ENCODE measurements at regions of chr7 and their contacts with region 1.

Region 1: GRCh38 chr7:155380221-155380861 is 77.6 kb upstream of the EN2 start:
- DNase-seq: peak; percentile 95

Region 2: GRCh38 chr7:155363852-155364562 is 16.3 kb before region 1 on chr7:
- CTCF ChIA-PET with region 1: interaction called, 12 read pairs
- POLR2A ChIA-PET with region 1: no interaction called
- DNase-seq: no peak

Region 3: DNA sequence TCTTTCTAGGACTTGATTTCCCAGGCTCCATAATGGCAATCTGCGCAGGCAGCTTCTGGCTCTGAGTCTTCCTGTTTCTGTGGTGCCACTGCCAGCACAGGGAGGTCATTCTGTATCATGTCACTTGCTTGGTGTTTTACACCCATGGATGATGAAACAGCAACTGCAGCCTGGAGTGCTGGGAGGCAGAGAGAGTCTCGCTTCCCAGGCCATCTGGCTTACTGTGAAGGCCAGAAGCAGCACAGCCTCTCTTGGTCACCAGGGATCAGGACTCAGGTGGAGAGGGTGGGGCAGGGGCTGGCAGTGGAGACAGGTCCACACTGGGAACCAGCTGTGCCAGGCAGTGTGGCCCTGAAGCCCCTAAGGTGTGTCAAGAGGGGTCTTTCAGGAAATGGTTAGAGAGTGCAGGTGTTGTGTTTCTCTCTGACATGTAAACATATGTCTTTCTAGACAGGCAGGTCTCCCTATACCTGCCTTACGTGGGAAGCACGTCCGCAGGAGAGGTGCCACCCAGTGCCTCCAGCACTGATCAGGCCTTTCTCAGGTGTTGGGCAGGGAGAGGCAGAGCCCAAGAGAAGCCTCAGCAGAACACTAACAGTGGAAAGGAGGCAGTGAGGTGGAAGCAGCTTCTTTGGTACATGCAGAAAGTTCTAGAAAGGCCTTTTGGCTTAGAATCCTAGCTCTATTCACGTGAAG is 11.3 kb before region 1 on chr7:
- CTCF ChIA-PET with region 1: interaction called, 12 read pairs
- POLR2A ChIA-PET with region 1: no interaction called
- DNase-seq: no peak

Region 4: DNA sequence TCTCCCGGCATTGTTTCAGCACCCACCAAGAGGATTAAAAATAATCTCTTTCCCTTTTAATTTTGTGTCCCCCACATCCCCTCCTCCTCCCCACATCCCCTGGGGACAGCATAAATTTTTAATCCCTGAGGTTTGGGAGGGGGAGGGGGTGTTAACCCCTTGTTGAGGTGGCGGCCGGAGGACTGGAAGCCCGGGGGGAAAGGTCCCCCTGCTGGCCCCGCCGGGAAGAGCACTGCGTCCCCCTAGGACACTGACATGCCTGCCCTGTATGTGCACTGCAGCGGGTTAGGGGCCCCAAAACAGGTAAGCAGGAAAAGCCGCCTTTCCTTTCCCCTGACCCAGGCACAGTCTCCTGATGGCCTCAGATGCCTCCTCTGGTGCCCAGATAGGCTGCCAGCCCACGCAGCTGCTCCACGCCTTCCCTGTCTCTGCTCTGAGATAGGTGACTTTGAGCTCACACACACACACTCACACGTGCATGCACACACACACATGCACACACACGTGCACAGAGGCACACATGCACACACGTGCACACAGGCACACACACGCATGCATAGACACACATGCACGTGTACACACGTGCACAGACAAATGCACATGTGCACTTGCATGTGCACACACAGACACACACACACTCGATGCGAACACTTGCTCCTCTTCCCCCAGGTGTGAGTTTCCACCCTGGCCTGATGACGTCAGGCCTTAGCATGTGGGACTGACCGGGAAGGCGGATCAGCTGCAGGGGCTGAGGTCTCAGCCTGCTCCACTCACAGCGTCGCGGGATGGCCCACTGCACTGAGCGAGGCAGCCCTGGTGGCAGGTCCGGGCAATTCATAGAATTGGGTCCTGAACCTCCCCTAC is 153.7 kb after region 1 on chr7:
- CTCF ChIA-PET with region 1: interaction called, 25 read pairs
- POLR2A ChIA-PET with region 1: interaction called, 3 read pairs
- DNase-seq: peak; percentile 92